Sigmoid colon (tissue), 7 donors: ENCODE measurements at regions of chr1 and their contacts with region 1.

Region 1: GRCh38 chr1:117067533-117068370 is 7.6 kb downstream of the TTF2 start:
- DNase-seq: peak; percentile 79
- H3K4me3 ChIP-seq: no peak overlapping the region
- H3K27ac ChIP-seq: no peak overlapping the region
- H3K4me1 ChIP-seq: peaks cover 0 to 3% (median 0%) of the 10 kb centered on the region in 4 donors
- H3K27me3 ChIP-seq: no peaks in the 10 kb centered on the region
- CTCF ChIP-seq: peak; percentile 65 to 77 (median 71)
- EP300 ChIP-seq: no peak
- POLR2A ChIP-seq: no peak

Region 2: GRCh38 chr1:117025568-117025967 is 42.2 kb before region 1 on chr1:
- intact Hi-C with region 1: no loop called
- DNase-seq: no peak
- H3K4me3 ChIP-seq: no peak overlapping the region
- H3K27ac ChIP-seq: no peak overlapping the region
- H3K4me1 ChIP-seq: peaks cover 0 to 7% (median 5%) of the 10 kb centered on the region in 4 donors
- H3K27me3 ChIP-seq: no peaks in the 10 kb centered on the region
- CTCF ChIP-seq: no peak
- EP300 ChIP-seq: no peak
- POLR2A ChIP-seq: no peak

Region 3: DNA sequence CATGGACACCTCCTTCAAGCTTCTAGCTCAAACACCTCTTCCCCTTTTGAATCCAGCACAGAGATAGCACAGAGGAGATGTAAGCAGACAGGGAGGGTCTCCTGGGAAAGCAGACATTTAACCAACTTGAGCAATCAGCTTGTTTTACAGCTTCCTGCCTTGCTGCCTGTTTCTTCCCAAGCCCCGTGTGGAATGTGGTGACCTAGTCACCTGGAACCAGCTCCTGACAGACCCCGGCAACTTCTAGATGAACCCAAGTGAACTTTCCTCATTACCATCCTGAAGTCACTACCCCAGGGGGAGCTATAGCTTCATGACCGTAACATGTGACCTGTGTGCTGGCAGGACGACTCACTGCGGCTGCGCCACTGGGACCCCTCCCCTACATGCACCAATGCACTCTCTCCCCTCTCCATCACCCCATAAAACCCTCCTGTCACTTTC is 31.7 kb before region 1 on chr1:
- intact Hi-C with region 1: no loop called
- DNase-seq: no peak
- H3K4me3 ChIP-seq: no peak overlapping the region
- H3K27ac ChIP-seq: no peak overlapping the region
- H3K4me1 ChIP-seq: no peaks in the 10 kb centered on the region
- H3K27me3 ChIP-seq: no peaks in the 10 kb centered on the region
- CTCF ChIP-seq: no peak
- EP300 ChIP-seq: no peak
- POLR2A ChIP-seq: no peak

Region 4: GRCh38 chr1:117128323-117129079 is 60.7 kb after region 1 on chr1:
- intact Hi-C with region 1: loop called (anchors 2 kb)
- DNase-seq: no peak
- H3K4me3 ChIP-seq: no peak overlapping the region
- H3K27ac ChIP-seq: no peak overlapping the region
- H3K4me1 ChIP-seq: no peaks in the 10 kb centered on the region
- H3K27me3 ChIP-seq: no peaks in the 10 kb centered on the region
- CTCF ChIP-seq: peak in 2 of 4 experiments; percentile 20 to 46
- EP300 ChIP-seq: no peak
- POLR2A ChIP-seq: no peak

Region 5: DNA sequence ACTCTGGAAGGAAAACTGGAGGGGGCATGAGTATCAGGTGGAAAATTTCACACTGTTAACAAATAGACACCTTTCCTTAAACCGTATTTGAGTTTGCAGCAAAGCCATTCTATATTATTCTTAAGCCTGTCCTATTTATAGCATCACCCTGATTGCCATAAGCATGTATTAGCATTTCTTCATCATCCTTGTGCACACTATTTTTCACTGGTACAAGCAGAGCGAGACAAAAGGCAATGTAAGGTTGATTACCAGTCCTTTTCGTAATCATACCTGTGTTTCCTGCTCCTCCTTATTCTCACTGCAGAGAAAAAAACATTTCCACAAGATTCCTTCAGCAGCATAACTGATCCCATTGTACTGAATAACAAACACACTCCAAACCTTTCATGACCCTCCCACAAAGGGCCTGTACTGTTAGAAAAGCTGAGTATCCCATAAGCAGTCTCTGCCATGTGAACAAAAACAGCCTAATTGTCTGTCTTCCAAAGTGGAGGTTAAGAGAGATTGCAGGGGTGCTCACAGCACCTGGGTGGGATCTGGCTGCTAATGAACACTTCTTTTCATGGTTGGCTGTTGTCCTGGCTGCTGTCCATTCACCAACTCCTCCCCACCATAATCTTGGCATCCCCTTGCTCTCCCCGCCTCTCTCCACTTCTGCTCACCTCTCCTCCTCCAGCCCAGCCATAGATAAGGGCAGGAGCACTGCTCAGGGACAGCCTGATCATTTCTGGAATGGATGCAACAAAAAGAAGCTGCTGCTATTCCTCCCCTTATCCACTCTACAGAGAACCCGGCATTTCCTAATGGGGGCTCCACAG is 112.6 kb after region 1 on chr1:
- intact Hi-C with region 1: no loop called
- DNase-seq: no peak
- H3K4me3 ChIP-seq: no peak overlapping the region
- H3K27ac ChIP-seq: no peak overlapping the region
- H3K4me1 ChIP-seq: no peaks in the 10 kb centered on the region
- H3K27me3 ChIP-seq: no peaks in the 10 kb centered on the region
- CTCF ChIP-seq: no peak
- EP300 ChIP-seq: no peak
- POLR2A ChIP-seq: no peak

Region 6: DNA sequence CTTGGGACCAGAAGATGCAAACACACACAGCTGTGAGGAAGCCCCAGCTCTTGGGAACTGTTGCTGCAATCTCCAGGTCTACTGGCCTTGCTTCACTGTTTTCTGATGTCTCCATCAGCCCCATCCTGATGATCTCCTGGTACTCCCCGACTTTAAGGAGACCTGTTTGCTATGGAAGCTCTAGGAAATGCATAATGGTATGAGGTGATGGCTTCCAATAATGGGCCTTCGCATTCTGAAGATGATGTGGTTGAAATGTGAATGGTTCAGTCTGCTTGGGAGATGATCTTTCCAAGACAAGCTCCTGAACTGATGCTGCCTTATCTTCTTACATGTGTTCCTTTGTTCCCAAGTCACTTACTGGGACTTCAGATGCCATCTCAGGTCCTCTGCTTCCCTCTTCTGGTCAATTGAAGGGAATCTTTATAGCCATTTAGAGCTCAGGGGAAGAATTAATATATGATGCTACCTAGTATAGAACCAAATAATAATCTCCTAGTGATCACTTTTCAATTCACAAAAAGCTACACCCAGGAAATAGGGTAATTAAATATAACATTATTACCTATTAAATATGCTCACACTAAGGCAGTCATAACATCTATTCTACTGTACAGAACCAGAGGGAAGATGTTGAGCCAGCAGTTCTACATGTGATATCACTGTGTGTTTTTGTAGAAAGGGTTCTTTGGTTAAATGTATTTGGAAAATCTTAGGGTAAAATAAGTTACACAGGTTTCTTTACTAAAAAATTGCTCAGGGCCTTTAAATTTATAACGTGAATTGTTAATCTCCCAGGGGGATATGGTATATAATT is 216.9 kb after region 1 on chr1:
- intact Hi-C with region 1: loop called (anchors 2 kb)
- DNase-seq: no peak
- H3K4me3 ChIP-seq: no peak overlapping the region
- H3K27ac ChIP-seq: no peak overlapping the region
- H3K4me1 ChIP-seq: no peaks in the 10 kb centered on the region
- H3K27me3 ChIP-seq: no peaks in the 10 kb centered on the region
- CTCF ChIP-seq: peak in 2 of 4 experiments; percentile 21 to 25
- EP300 ChIP-seq: no peak
- POLR2A ChIP-seq: no peak